Transverse colon (tissue), 4 donors: ENCODE measurements at regions of chr6 and their contacts with region 1.

Region 1: GRCh38 chr6:102986086-102986485 is 1592.6 kb downstream of the GRIK2 start:
- DNase-seq: no peak
- H3K4me3 ChIP-seq: no peak overlapping the region
- H3K27ac ChIP-seq: no peak overlapping the region
- H3K4me1 ChIP-seq: no peaks in the 10 kb centered on the region
- H3K27me3 ChIP-seq: no peaks in the 10 kb centered on the region
- CTCF ChIP-seq: no peak
- EP300 ChIP-seq: no peak
- POLR2A ChIP-seq: no peak

Region 2: DNA sequence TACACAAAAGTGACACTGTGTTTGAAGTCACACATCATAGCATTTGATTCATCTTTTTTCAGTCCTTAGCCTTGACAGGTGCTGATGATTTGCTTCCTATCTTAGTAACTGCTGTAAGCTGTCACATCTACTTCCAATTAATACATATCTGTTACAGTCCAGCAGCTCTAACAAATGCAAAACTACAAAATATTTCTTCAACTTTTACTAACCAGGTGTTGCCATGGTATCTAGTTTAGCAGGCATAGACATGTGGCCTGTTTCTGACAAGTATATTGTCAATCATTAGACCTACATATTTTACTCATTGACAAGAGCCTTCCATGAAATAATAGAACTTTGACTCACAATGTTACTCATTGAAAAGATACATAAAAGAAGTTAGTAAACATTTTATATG is 432.9 kb before region 1 on chr6:
- in situ Hi-C with region 1: no loop called
- intact Hi-C with region 1: no loop called
- DNase-seq: no peak
- H3K4me3 ChIP-seq: no peak overlapping the region
- H3K27ac ChIP-seq: no peak overlapping the region
- H3K4me1 ChIP-seq: no peaks in the 10 kb centered on the region
- H3K27me3 ChIP-seq: no peaks in the 10 kb centered on the region
- CTCF ChIP-seq: no peak
- EP300 ChIP-seq: no peak
- POLR2A ChIP-seq: no peak

Region 3: GRCh38 chr6:103167345-103168071 is 181.4 kb after region 1 on chr6:
- in situ Hi-C with region 1: no loop called
- intact Hi-C with region 1: no loop called
- DNase-seq: no peak
- H3K4me3 ChIP-seq: no peak overlapping the region
- H3K27ac ChIP-seq: no peak overlapping the region
- H3K4me1 ChIP-seq: no peaks in the 10 kb centered on the region
- H3K27me3 ChIP-seq: no peaks in the 10 kb centered on the region
- CTCF ChIP-seq: no peak
- EP300 ChIP-seq: no peak
- POLR2A ChIP-seq: no peak

Region 4: GRCh38 chr6:103617642-103618041 is 631.6 kb after region 1 on chr6:
- in situ Hi-C with region 1: no loop called
- intact Hi-C with region 1: loop called (anchors 5 kb)
- DNase-seq: no peak
- H3K4me3 ChIP-seq: no peak overlapping the region
- H3K27ac ChIP-seq: no peak overlapping the region
- H3K4me1 ChIP-seq: no peaks in the 10 kb centered on the region
- H3K27me3 ChIP-seq: no peaks in the 10 kb centered on the region
- CTCF ChIP-seq: no peak
- EP300 ChIP-seq: no peak
- POLR2A ChIP-seq: no peak